ENCODE measurements at regions of chr17 and their contacts with region 1.

Region 1: DNA sequence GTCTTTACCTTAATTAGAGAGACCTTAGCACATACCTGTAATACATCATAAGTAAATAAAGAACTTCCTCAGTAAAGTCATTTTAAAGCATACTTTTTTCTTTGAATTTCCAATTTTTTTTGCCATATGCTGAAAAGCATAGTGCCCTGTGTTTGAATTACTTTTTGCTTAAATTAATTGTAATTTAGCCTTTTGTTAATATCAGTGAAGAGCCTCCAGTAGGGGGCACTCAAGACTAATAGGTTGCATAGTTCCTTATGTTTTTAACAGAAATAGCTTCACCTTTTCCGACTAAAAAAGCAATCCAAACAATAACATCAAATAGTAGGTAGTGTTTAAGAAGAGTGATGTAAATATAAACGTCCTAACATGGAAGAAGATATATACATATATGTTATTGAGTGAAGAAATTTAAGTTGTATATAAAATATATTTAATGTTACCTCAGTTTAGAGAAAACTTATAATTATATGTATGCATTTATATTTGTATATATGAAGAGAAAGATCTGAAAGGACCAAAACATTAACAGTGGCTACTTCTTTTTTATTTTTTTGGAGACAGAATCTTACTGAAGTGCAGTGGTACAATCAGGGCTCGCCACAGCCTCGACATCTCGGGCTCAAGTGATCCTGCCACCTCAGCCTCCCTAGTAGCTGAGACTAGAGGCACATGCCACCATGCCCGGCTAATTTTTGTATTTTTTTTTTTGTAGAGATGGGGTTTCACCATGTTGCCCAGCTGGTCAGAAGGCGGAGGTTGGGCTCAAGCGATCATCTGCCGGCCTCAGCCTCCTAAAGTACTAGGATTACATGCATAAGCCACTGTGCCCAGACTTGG is 18.8 kb downstream of the RAD51C start:
- DNase-seq: peak; percentile 21 to 73 (median 23)
- ATAC-seq: peak; percentile 68
- H3K4me3 ChIP-seq: no peak overlapping the region
- H3K27ac ChIP-seq: no peak overlapping the region
- H3K4me1 ChIP-seq: peaks cover 2 to 7% of the 10 kb centered on the region in 2 experiments; a peak in 3 of 5 replicates
- H3K27me3 ChIP-seq: no peaks in the 10 kb centered on the region
- CTCF ChIP-seq: peak in 2 of 3 experiments; percentile 57 to 85; a peak in 4 of 6 replicates
- EP300 ChIP-seq: no peak
- POLR2A ChIP-seq: no peak
- RAD21 ChIP-seq: peak; percentile 87 to 94

Region 2: GRCh38 chr17:58329035-58329809 is 381.9 kb before region 1 on chr17:
- CTCF ChIA-PET with region 1: no interaction called
- POLR2A ChIA-PET with region 1: no interaction called
- in situ Hi-C with region 1: no loop called
- intact Hi-C with region 1: no loop called
- DNase-seq: peak; percentile 59 to 95 (median 74)
- ATAC-seq: peak; percentile 67
- H3K4me3 ChIP-seq: peak overlapping the region; percentile 91
- H3K27ac ChIP-seq: peak overlapping the region; percentile 99
- H3K4me1 ChIP-seq: peaks cover 25 to 56% of the 10 kb centered on the region in 2 experiments
- H3K27me3 ChIP-seq: no peaks in the 10 kb centered on the region
- CTCF ChIP-seq: peak; percentile 67 to 82 (median 72)
- EP300 ChIP-seq: no peak
- POLR2A ChIP-seq: peak; percentile 76
- RAD21 ChIP-seq: peak; percentile 48 to 56

Region 3: DNA sequence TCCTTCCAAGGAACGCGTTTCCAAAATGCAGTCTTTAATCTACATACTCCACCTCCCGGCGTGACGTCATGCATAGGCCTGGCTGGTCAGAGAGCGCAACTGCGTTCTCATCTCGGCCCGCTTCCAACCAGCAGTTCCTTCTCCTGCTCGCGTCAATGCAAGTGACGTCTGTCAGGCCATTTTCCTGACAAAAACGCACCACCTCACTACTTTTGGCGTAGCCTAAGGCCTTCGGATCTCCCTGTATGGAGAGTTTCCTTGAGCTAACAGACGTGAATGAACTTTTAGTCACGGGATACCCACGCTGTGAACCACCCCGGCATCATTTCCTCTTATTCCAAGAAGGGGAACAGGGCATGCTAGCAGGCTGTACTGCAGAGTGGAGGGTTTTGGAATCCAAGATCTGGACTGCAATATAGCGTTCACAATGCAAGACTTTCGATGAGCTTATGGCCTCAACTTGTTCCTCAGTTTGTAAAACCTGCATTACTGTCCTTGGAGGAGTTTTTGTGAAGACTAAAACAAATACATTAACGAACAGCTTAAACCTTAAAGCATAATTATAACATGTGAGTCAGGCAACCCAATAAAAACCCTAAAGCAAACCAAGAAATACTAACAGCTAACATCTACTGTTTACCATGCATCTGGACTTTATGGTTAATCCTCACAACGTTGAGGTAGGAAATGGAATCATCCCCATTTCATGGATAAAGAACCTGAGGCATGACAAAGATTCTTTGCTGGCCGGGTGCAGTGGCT is 44.1 kb before region 1 on chr17:
- CTCF ChIA-PET with region 1: no interaction called
- POLR2A ChIA-PET with region 1: no interaction called
- in situ Hi-C with region 1: no loop called
- intact Hi-C with region 1: no loop called
- DNase-seq: peak; percentile 76 to 95 (median 78)
- ATAC-seq: peak; percentile 88
- H3K4me3 ChIP-seq: peak overlapping the region; percentile 25
- H3K27ac ChIP-seq: peak overlapping the region; percentile 81
- H3K4me1 ChIP-seq: peaks cover 15 to 26% of the 10 kb centered on the region in 2 experiments
- H3K27me3 ChIP-seq: no peaks in the 10 kb centered on the region
- CTCF ChIP-seq: no peak
- EP300 ChIP-seq: no peak
- POLR2A ChIP-seq: no peak
- RAD21 ChIP-seq: no peak

Region 4: GRCh38 chr17:58870753-58871152 is 159.6 kb after region 1 on chr17:
- CTCF ChIA-PET with region 1: no interaction called
- POLR2A ChIA-PET with region 1: no interaction called
- in situ Hi-C with region 1: no loop called
- intact Hi-C with region 1: loop called (anchors 10 kb)
- DNase-seq: no peak
- ATAC-seq: no peak
- H3K4me3 ChIP-seq: no peak overlapping the region
- H3K27ac ChIP-seq: no peak overlapping the region
- H3K4me1 ChIP-seq: no peaks in the 10 kb centered on the region
- H3K27me3 ChIP-seq: no peaks in the 10 kb centered on the region
- CTCF ChIP-seq: no peak
- EP300 ChIP-seq: no peak
- POLR2A ChIP-seq: no peak
- RAD21 ChIP-seq: no peak